A673 (cell line): ENCODE measurements at regions of chr16 and their contacts with region 1.

Region 1: GRCh38 chr16:24499193-24499814 is 40.1 kb upstream of the RBBP6 start:
- DNase-seq: peak; percentile 95
- H3K4me3 ChIP-seq: no peak overlapping the region
- H3K27ac ChIP-seq: peak overlapping the region; percentile 85
- H3K4me1 ChIP-seq: peaks cover 54% of the 10 kb centered on the region
- H3K27me3 ChIP-seq: no peaks in the 10 kb centered on the region
- CTCF ChIP-seq: peak; percentile 92

Region 2: GRCh38 chr16:24041826-24042631 is 457.3 kb before region 1 on chr16:
- CTCF ChIA-PET with region 1: interaction called, 21 read pairs
- POLR2A ChIA-PET with region 1: no interaction called
- intact Hi-C with region 1: loop called (anchors 1 kb)
- DNase-seq: peak; percentile 87
- H3K4me3 ChIP-seq: no peak overlapping the region
- H3K27ac ChIP-seq: no peak overlapping the region
- H3K4me1 ChIP-seq: peaks cover 23% of the 10 kb centered on the region
- H3K27me3 ChIP-seq: no peaks in the 10 kb centered on the region
- CTCF ChIP-seq: peak; percentile 86

Region 3: GRCh38 chr16:24409049-24409448 is 90.3 kb before region 1 on chr16:
- CTCF ChIA-PET with region 1: interaction called, 4 read pairs
- POLR2A ChIA-PET with region 1: no interaction called
- intact Hi-C with region 1: loop called (anchors 1 kb)
- DNase-seq: peak; percentile 23
- H3K4me3 ChIP-seq: no peak overlapping the region
- H3K27ac ChIP-seq: no peak overlapping the region
- H3K4me1 ChIP-seq: peaks cover 6% of the 10 kb centered on the region
- H3K27me3 ChIP-seq: no peaks in the 10 kb centered on the region
- CTCF ChIP-seq: peak; percentile 63

Region 4: DNA sequence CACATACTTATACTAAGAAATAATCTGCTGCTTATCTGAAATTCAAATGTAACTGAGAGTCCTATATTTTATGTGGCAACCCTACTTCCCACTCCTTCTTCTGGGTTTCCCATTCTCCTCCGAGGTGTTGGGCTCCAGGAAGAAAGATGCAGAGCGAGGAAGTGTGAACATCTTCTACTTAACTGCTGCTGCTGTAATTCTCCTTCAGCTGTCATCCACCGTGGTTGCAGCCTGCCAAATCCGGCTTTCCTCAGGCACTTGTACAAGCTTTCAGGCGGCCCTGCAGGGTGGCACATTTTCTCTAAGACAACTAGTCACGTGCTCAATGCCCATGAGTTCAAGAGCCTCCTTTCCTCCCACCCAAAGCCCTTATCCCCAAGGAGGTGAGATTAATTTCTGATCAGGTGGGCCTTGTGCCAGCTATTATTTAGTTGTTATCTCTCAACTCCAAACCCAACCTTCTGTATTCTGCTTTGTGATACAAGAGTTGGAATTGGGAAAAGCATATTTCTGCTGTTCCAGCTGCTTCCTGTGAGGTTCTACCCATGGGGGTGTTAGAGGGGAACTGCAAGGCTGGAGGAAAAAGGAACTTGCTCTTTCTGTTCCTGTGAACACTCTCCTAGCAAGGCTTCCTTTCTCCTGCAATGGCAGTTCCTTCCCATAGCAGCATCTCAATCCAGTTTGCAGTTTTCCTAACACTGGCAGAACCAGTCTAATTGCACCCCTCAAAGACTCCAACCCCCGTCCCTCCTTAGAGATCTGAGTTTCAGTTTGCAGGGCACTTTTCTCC is 27.5 kb before region 1 on chr16:
- CTCF ChIA-PET with region 1: no interaction called
- POLR2A ChIA-PET with region 1: no interaction called
- intact Hi-C with region 1: no loop called
- DNase-seq: peak; percentile 55
- H3K4me3 ChIP-seq: no peak overlapping the region
- H3K27ac ChIP-seq: no peak overlapping the region
- H3K4me1 ChIP-seq: peaks cover 13% of the 10 kb centered on the region
- H3K27me3 ChIP-seq: no peaks in the 10 kb centered on the region
- CTCF ChIP-seq: no peak